H1 (cell line): ENCODE measurements at regions of chr17 and their contacts with region 1.

Region 1: DNA sequence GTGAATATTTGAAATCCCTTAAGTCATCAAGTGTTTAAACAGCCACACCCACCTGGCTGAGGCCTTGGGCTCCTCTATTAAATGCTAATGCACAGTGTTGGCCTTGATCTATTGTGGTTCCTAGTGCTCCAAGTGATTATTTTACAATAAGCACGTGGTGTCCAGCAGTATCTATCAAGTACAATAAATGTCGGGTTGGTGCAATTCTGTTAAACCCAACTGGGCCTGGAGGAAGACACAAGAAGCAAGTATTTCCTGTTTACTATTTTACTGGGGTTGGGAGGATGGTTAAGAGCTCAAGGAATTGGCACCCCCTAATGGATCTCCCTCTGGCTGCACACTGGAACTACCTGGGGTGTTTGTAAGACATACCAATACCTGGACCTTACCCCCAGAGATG is 72.1 kb upstream of the HNF1B start:
- DNase-seq: no peak
- H3K4me3 ChIP-seq: no peak overlapping the region
- H3K27ac ChIP-seq: no peak overlapping the region
- H3K4me1 ChIP-seq: no peaks in the 10 kb centered on the region
- H3K27me3 ChIP-seq: no peaks in the 10 kb centered on the region
- CTCF ChIP-seq: peak in 1 of 3 experiments; percentile 10; a peak in 2 of 4 replicates
- EP300 ChIP-seq: no peak
- POLR2A ChIP-seq: no peak
- RAD21 ChIP-seq: peak in 1 of 2 experiments; percentile 26; a peak in 1 of 4 replicates

Region 2: DNA sequence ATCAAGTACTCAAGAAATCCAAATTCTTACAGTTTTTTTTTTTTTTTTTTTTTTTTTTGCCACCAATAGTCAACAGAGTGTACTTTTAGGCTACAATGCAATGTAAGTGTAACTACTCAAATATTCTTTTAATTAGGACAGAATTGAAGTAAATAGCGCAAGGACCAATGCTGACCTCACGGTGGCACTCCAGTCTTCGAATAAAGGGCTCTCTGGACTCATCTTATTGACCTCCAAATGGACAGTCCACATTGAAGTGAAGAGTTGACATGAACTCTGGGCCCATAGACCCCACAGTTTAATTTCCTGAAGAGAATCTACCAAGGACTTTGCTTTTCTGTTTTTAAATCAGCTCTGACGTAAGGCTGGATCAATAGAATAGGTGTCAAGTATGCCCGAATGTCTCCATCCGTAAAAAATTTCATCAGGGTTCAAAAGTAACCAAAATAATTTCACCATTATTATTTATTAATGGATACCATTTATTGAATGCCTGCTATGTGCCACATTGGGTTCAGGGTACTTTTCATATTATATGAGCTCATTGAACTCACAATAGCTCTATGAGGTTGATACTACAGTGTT is 166.4 kb before region 1 on chr17:
- CTCF ChIA-PET with region 1: interaction called, 37 read pairs
- POLR2A ChIA-PET with region 1: no interaction called
- DNase-seq: no peak
- H3K4me3 ChIP-seq: no peak overlapping the region
- H3K27ac ChIP-seq: no peak overlapping the region
- H3K4me1 ChIP-seq: no peaks in the 10 kb centered on the region
- H3K27me3 ChIP-seq: no peaks in the 10 kb centered on the region; a peak in 3 of 7 replicates
- CTCF ChIP-seq: peak; percentile 20 to 73 (median 68)
- EP300 ChIP-seq: no peak
- POLR2A ChIP-seq: no peak
- RAD21 ChIP-seq: peak; percentile 80 to 87

Region 3: DNA sequence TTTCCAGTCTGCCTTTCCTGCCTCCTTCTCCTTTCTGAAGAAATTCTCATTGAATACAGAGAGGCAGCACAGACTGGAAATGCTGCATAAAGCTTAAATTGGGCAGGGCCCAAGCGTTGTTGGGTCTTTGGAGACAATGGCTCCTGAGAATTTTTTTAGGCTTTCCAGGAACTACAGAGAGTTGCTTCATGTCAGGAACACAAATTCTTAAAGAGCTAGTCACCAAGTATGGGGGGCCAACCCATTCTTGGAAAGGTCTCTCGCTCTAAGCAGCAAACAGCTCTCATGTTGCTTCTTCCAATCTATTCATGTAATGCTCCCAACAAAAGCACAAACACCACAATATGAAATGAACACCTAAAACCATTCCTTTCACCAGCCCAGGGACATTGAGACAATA is 79.0 kb before region 1 on chr17:
- CTCF ChIA-PET with region 1: no interaction called
- POLR2A ChIA-PET with region 1: no interaction called
- DNase-seq: no peak
- H3K4me3 ChIP-seq: no peak overlapping the region
- H3K27ac ChIP-seq: no peak overlapping the region
- H3K4me1 ChIP-seq: peaks cover 0 to 3% (median 0%) of the 10 kb centered on the region in 4 experiments; a peak in 3 of 7 replicates
- H3K27me3 ChIP-seq: peaks cover 23 to 67% (median 51%) of the 10 kb centered on the region in 4 experiments
- CTCF ChIP-seq: no peak
- EP300 ChIP-seq: no peak
- POLR2A ChIP-seq: no peak
- RAD21 ChIP-seq: no peak

Region 4: DNA sequence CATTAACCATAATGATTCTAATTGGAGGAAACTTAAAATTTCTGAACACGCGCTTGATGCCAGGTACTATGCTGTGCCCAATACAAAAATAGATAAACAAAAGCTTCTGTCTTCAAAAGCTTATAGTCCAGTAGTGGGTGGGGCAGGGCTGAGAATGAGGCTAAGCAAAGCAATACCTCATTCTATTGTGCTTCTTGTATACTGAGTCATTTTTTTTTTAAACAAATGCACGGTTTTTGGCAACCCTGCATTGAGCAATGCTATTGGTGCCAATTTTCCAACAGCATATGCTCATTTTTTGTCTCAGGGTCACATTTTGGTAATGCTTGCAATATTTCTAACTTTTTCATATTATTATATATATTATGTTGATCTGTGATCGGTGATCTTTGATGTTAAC is 37.4 kb before region 1 on chr17:
- CTCF ChIA-PET with region 1: no interaction called
- POLR2A ChIA-PET with region 1: no interaction called
- DNase-seq: no peak
- H3K4me3 ChIP-seq: no peak overlapping the region
- H3K27ac ChIP-seq: no peak overlapping the region
- H3K4me1 ChIP-seq: no peaks in the 10 kb centered on the region
- H3K27me3 ChIP-seq: no peaks in the 10 kb centered on the region
- CTCF ChIP-seq: no peak
- EP300 ChIP-seq: no peak
- POLR2A ChIP-seq: no peak
- RAD21 ChIP-seq: no peak

Region 5: GRCh38 chr17:37844158-37844976 is 27.4 kb after region 1 on chr17:
- CTCF ChIA-PET with region 1: interaction called, 10 read pairs
- POLR2A ChIA-PET with region 1: no interaction called
- DNase-seq: peak; percentile 29 to 90
- H3K4me3 ChIP-seq: peak overlapping the region in 3 of 4 experiments; percentile 17 to 57 (median 23); a peak in 5 of 8 replicates
- H3K27ac ChIP-seq: no peak overlapping the region
- H3K4me1 ChIP-seq: no peaks in the 10 kb centered on the region; a peak in 2 of 7 replicates
- H3K27me3 ChIP-seq: no peaks in the 10 kb centered on the region; a peak in 1 of 7 replicates
- CTCF ChIP-seq: peak; percentile 80 to 94 (median 88)
- EP300 ChIP-seq: no peak
- POLR2A ChIP-seq: no peak
- RAD21 ChIP-seq: peak; percentile 74 to 85